Calu3 (cell line): ENCODE measurements at regions of chr2 and their contacts with region 1.

Region 1: GRCh38 chr2:7083577-7084509 is 166.6 kb downstream of the RNF144A start:
- DNase-seq: peak; percentile 40
- H3K4me3 Mint-ChIP-seq: no peak overlapping the region
- H3K27ac Mint-ChIP-seq: no peak overlapping the region
- H3K4me1 Mint-ChIP-seq: no peaks in the 10 kb centered on the region
- H3K27me3 Mint-ChIP-seq: peaks cover 17% of the 10 kb centered on the region
- CTCF ChIP-seq: peak; percentile 64

Region 2: GRCh38 chr2:7037340-7038333 is 46.2 kb before region 1 on chr2:
- CTCF ChIA-PET with region 1: no interaction called
- intact Hi-C with region 1: loop called (anchors 5 kb)
- DNase-seq: peak; percentile 72
- H3K4me3 Mint-ChIP-seq: no peak overlapping the region
- H3K27ac Mint-ChIP-seq: no peak overlapping the region
- H3K4me1 Mint-ChIP-seq: no peaks in the 10 kb centered on the region
- H3K27me3 Mint-ChIP-seq: no peaks in the 10 kb centered on the region
- CTCF ChIP-seq: peak; percentile 66

Region 3: GRCh38 chr2:7146151-7146550 is 62.3 kb after region 1 on chr2:
- CTCF ChIA-PET with region 1: no interaction called
- intact Hi-C with region 1: no loop called
- DNase-seq: no peak
- H3K4me3 Mint-ChIP-seq: no peak overlapping the region
- H3K27ac Mint-ChIP-seq: no peak overlapping the region
- H3K4me1 Mint-ChIP-seq: no peaks in the 10 kb centered on the region
- H3K27me3 Mint-ChIP-seq: no peaks in the 10 kb centered on the region
- CTCF ChIP-seq: no peak